Stomach (tissue), 19 donors: ENCODE measurements at regions of chr7 and their contacts with region 1.

Region 1: GRCh38 chr7:40786909-40787308 is 652.1 kb downstream of the SUGCT start:
- DNase-seq: no peak
- H3K4me3 ChIP-seq: no peak overlapping the region
- H3K27ac ChIP-seq: no peak overlapping the region
- H3K4me1 ChIP-seq: no peaks in the 10 kb centered on the region
- H3K27me3 ChIP-seq: no peaks in the 10 kb centered on the region
- CTCF ChIP-seq: no peak
- EP300 ChIP-seq: no peak
- POLR2A ChIP-seq: no peak

Region 2: DNA sequence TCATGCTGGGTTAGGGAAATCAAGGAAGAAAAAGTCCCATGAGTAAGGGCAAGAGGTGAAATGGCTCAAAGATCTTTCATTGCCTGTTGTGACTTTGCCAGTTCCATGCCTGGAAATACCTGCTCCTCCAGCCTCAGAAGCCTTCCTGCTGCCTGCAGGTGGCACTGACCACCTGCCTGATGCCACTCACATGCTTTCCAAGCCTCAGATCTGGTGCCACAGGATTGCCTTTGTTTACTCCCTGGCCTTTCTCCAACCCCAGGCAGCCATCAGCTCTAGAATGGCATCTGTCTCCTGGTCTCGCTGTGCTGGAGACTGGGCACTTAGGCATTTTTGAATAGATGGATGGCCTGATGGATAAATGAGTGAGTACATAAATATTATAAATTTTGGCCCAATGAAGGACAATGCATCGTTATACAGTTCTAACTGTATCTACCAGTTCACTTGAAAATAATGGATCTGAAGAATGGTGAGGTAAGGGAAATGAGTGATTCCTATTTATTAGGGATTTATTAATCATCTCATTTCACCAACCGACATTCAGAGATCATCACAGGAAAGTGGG is 258.7 kb after region 1 on chr7:
- intact Hi-C with region 1: loop called (anchors 5 kb)
- DNase-seq: peak; percentile 49 to 72
- H3K4me3 ChIP-seq: no peak overlapping the region
- H3K27ac ChIP-seq: no peak overlapping the region
- H3K4me1 ChIP-seq: no peaks in the 10 kb centered on the region
- H3K27me3 ChIP-seq: no peaks in the 10 kb centered on the region
- CTCF ChIP-seq: peak in 1 of 7 experiments; percentile 49
- EP300 ChIP-seq: no peak
- POLR2A ChIP-seq: no peak